ENCODE measurements at regions of chr5 and their contacts with region 1.

Region 1: GRCh38 chr5:147935032-147935431 is 28.7 kb upstream of the C5orf46 start:
- DNase-seq: no peak
- ATAC-seq: peak; percentile 78

Region 2: DNA sequence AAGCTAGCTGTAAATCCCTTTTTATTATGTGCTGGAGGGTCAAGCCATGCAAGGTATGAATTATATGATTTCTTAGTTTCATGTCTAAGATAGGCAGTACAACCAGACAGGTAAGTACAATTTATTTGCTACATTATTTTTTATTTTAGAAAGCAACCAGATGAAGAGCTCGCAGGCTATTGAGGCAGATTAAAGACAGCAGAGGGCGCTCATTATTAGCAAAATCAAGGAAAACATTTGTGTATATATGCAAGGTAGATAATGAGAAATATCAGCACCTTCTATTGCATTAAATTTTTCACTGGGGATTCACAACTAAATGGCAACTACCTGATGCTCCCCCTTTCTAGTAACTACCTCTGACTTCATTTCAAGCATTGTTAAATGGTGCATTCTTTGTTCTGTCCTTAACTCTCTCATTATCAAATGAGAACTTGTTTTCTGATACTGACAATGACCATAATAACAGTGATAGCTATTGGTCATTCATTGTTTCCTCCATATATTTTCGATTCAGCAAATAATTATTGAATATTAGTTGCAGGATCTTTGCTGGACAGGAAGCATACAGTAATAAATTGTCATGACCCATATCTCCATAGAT is 47.9 kb before region 1 on chr5:
- intact Hi-C with region 1: loop called in 1 of 2 experiments (anchors 10 kb)
- DNase-seq: no peak
- ATAC-seq: peak; percentile 48

Region 3: DNA sequence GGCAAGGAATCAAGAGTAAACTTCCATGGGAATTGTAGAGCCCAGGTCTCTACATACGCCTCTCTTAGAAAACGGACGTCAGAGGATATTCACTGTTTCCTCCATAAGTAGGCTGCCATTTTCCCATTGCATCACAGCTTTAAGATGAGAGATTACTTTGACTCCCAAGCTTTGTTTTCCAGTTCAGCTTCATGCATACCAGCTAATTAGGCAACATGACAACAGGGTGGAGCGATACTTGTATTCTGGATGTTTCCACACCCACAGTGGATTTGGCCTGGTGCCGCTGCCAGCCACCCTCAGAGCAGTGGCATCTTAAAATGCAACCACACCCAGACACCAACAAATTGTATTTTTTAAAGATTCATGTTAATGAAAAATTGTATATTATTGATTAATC is 107.8 kb after region 1 on chr5:
- intact Hi-C with region 1: no loop called
- DNase-seq: no peak
- ATAC-seq: no peak

Measured in left colon (tissue), 2 donors.